Mammary epithelial cell (primary cell): ENCODE measurements at regions of chr1 and their contacts with region 1.

Region 1: DNA sequence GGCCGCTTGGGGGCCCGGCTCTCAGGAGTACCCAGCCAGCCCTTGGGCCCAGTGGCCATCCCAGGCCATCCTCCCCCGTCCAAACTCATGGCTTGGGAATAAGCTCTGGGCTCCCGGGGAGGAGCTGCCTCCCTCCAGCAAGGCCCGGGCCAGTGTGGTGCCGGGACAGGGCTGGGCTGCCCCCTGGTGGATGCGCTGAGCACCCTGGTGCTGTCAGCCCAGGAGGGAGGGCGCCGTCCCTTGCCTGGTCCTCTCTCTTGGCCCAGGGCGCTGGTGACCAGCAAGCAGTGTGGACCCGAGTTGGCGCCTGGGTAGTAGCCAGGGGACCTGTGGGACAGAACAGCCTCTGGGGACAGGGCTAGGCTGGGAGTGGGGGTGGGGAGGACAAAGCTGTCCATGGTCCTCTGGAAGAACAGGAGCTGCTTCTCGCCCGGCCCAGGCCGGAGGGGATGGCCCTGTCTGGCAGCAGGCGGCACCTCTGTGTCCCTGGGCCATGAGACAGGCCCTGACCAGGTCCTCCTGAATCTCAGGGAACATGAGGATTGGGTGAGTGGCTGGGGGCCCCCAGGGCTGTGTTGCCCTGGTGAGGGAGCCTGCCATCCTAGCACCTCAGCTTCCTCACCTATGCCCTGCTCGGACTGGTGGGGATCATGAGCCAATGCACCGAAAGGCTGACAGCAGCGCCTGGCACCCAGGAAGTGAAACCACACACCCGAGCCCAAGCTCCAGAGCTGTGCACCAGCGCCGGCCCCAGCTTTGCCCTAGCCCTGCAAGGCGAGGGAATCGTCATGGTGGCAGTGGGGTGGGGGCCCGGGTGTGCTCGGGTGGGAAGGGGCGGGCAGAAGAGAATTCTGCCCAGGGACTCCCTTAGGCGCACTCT is 9.4 kb downstream of the MORN1 start:
- DNase-seq: peak; percentile 55
- H3K4me3 ChIP-seq: no peak overlapping the region
- H3K27ac ChIP-seq: no peak overlapping the region
- H3K4me1 ChIP-seq: no peaks in the 10 kb centered on the region
- H3K27me3 ChIP-seq: no peaks in the 10 kb centered on the region
- CTCF ChIP-seq: peak; percentile 69 to 95

Region 2: DNA sequence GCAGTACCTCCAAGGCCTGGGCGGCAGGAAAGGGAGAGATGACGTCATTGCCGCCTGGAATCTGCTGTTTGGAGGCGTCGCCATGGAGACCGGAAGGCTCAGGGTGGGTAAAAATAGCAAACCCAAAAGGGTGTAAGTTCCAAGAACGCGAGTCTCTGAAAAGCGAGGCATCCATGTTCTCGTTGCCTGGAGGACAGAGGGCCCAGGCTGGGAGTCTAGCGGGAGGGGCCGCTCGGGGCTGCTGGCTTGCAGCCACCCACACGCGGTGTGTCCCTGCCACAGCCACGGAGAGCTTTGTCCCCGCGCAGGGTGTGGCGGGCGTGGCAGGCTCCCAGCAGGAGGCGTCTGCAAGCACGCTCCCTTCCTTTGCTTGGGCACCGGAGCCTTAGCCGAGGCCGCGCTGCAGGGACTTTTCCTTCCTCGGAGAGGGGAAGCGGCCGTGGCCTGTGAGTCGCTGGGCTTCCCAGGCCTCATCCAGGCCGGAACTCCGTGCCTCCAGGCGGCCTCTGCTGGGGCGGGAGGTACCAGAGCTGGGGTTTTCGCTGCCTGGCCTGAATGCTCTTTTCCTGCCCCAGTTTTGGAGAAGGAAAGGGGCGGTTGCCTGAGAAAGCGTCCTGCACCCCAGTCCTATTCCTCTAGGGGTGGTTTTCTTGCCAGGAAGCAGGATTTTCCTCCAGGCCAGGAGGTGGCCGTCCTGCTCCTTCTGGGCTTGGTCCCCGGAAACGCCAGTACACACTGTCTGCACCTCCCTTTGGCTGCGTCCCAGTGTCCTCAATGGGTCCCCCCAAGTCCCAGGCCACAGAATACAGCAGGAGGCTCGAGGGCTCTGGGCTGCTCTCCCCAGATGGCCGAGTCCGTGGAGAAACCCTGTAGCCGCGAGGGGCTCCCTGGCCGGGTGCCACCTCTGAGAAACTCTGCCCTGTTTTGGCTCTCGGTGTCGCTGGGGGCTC is 169.2 kb before region 1 on chr1:
- CTCF ChIA-PET with region 1: no interaction called
- dilution Hi-C with region 1: no loop called
- in situ Hi-C with region 1: no loop called
- intact Hi-C with region 1: loop called (anchors 5 kb)
- DNase-seq: peak; percentile 77
- H3K4me3 ChIP-seq: peak overlapping the region; percentile 1 to 27 (median 14)
- H3K27ac ChIP-seq: peak overlapping the region; percentile 79
- H3K4me1 ChIP-seq: peaks cover 46% of the 10 kb centered on the region
- H3K27me3 ChIP-seq: no peaks in the 10 kb centered on the region
- CTCF ChIP-seq: peak; percentile 22 to 44

Region 3: DNA sequence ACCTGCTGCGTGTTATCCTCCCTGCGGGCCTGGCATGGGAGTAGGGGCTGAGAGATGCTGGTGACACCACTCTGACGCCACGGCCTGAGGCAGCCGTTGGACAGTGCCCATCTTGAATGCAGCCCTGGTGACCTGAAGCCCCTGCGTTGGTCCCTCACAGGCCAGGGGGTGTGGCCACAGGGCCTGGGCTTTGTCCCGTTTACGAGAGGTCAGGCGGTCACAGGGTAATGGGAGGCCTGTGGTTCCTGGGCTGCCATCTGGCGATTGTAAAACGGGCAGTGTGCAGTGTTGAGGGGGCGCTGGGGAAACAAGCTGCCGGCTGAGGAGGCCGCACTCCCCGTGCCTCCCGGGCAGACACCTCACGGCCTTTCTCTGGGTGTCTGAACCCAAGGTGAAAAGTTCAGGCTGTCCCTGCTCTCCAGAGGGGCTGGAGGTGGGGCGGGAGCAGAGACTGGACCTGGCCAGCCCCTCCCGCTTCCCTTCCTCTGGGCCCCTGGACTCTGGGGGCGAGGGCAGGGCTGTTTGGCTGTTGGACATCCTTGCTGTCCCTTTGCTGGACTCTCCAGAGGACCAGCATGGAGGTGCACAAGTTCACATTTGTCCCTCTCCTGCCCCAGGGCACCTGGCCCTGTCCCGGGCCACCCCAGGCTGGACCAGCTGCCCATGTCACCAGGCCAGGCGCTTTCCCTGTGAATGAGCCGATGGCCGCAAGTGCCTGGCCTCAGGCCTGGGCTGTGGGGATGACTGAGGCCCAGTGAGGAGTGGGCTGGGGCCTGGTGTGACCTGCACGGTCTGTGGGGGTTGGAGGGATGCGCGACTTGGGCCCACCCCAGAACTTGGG is 111.5 kb before region 1 on chr1:
- CTCF ChIA-PET with region 1: no interaction called
- dilution Hi-C with region 1: loop called (anchors 5 kb)
- in situ Hi-C with region 1: no loop called
- intact Hi-C with region 1: no loop called
- DNase-seq: no peak
- H3K4me3 ChIP-seq: no peak overlapping the region
- H3K27ac ChIP-seq: no peak overlapping the region
- H3K4me1 ChIP-seq: peaks cover 17% of the 10 kb centered on the region
- H3K27me3 ChIP-seq: no peaks in the 10 kb centered on the region
- CTCF ChIP-seq: no peak

Region 4: GRCh38 chr1:2300851-2301606 is 81.0 kb before region 1 on chr1:
- CTCF ChIA-PET with region 1: no interaction called
- dilution Hi-C with region 1: loop called (anchors 5 kb)
- in situ Hi-C with region 1: no loop called
- intact Hi-C with region 1: no loop called
- DNase-seq: no peak
- H3K4me3 ChIP-seq: no peak overlapping the region
- H3K27ac ChIP-seq: no peak overlapping the region
- H3K4me1 ChIP-seq: peaks cover 33% of the 10 kb centered on the region
- H3K27me3 ChIP-seq: no peaks in the 10 kb centered on the region
- CTCF ChIP-seq: no peak

Region 5: GRCh38 chr1:2314803-2315673 is 66.9 kb before region 1 on chr1:
- CTCF ChIA-PET with region 1: interaction called, 15 read pairs
- dilution Hi-C with region 1: no loop called
- in situ Hi-C with region 1: no loop called
- intact Hi-C with region 1: loop called (anchors 10 kb)
- DNase-seq: no peak
- H3K4me3 ChIP-seq: peak overlapping the region in 2 of 3 experiments; percentile 38 to 49
- H3K27ac ChIP-seq: no peak overlapping the region
- H3K4me1 ChIP-seq: peaks cover 15% of the 10 kb centered on the region
- H3K27me3 ChIP-seq: no peaks in the 10 kb centered on the region
- CTCF ChIP-seq: peak; percentile 21 to 58

Region 6: GRCh38 chr1:2422523-2422922 is 40.5 kb after region 1 on chr1:
- CTCF ChIA-PET with region 1: no interaction called
- dilution Hi-C with region 1: loop called (anchors 5 kb)
- in situ Hi-C with region 1: no loop called
- intact Hi-C with region 1: no loop called
- DNase-seq: no peak
- H3K4me3 ChIP-seq: no peak overlapping the region
- H3K27ac ChIP-seq: no peak overlapping the region
- H3K4me1 ChIP-seq: peaks cover 6% of the 10 kb centered on the region
- H3K27me3 ChIP-seq: no peaks in the 10 kb centered on the region
- CTCF ChIP-seq: no peak